ENCODE measurements at regions of chr1 and their contacts with region 1.

Region 1: DNA sequence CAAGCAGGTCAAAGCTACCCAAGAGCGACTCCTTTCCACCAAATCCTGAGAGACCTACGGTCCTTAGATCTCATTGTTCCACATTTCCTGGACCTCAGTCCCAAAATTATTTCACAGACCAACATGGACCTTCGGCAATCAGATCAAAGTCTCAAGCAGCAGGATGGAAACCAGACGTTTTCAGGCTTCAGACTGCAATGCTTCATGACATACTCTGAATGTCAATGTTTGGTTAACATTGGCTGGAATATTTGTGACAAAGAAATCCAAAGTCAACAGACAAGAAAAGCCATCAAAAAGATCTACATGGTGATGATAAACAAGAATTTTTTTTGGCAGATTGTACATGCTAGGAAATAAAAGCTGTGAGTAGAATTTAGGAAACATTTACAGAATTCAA is 1057.3 kb downstream of the ADGRL2 start:
- DNase-seq: no peak
- ATAC-seq: no peak
- H3K4me3 Mint-ChIP-seq: no peak overlapping the region
- H3K27ac Mint-ChIP-seq: no peak overlapping the region
- H3K4me1 Mint-ChIP-seq: no peaks in the 10 kb centered on the region
- H3K27me3 Mint-ChIP-seq: peaks cover 0 to 3% (median 1%) of the 10 kb centered on the region in 5 donors

Region 2: GRCh38 chr1:82721702-82722101 is 136.3 kb before region 1 on chr1:
- POLR2A ChIA-PET with region 1: interaction called, 10 read pairs
- DNase-seq: no peak
- ATAC-seq: no peak
- H3K4me3 Mint-ChIP-seq: no peak overlapping the region
- H3K27ac Mint-ChIP-seq: no peak overlapping the region
- H3K4me1 Mint-ChIP-seq: no peaks in the 10 kb centered on the region
- H3K27me3 Mint-ChIP-seq: no peaks in the 10 kb centered on the region

Measured in naive thymus-derived CD8-positive, alpha-beta T cell (primary cell).